ENCODE measurements at regions of chr3 and their contacts with region 1.

Region 1: GRCh38 chr3:45760878-45761711 is 35.2 kb downstream of the SLC6A20 start:
- DNase-seq: peak; percentile 60
- ATAC-seq: peak; percentile 77
- H3K4me3 Mint-ChIP-seq: no peak overlapping the region
- H3K27ac Mint-ChIP-seq: no peak overlapping the region
- H3K4me1 Mint-ChIP-seq: peaks cover 2% of the 10 kb centered on the region
- H3K27me3 Mint-ChIP-seq: peaks cover 3% of the 10 kb centered on the region
- CTCF ChIP-seq: peak; percentile 77

Region 2: DNA sequence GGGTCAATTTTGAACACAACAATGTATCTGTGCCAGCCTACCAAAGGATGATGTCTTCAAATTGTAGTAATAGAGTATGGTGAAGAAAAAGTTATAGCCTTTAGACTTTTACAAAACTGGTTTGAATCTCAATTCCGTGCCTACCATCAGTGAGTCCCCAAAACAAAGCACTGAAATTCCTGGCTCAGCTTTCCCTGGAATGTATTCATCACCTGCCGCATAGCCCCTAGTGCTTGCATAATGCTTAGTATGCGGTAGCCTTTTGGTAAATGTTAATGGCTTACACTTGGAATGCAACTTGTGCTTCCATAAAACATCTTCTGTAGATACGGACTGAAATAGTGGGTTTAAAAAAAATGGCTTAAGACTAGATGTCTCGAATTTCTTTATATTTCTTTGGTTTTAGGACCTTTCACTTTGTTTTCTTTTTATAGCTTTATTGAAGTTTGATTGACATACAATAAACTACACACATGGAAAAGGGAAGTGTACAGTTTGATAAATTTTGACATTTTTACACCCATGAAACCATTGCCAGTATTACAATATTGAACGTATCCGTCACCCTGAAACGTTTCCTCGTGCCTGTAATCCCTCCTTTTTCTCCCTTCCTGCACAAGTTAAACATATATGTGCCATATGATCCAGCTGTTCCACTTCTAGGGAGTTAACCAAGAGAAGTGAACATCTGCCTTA is 59.8 kb before region 1 on chr3:
- CTCF ChIA-PET with region 1: no interaction called
- POLR2A ChIA-PET with region 1: no interaction called
- intact Hi-C with region 1: no loop called
- DNase-seq: no peak
- ATAC-seq: no peak
- H3K4me3 Mint-ChIP-seq: no peak overlapping the region
- H3K27ac Mint-ChIP-seq: no peak overlapping the region
- H3K4me1 Mint-ChIP-seq: peaks cover 62% of the 10 kb centered on the region
- H3K27me3 Mint-ChIP-seq: no peaks in the 10 kb centered on the region
- CTCF ChIP-seq: no peak

Region 3: DNA sequence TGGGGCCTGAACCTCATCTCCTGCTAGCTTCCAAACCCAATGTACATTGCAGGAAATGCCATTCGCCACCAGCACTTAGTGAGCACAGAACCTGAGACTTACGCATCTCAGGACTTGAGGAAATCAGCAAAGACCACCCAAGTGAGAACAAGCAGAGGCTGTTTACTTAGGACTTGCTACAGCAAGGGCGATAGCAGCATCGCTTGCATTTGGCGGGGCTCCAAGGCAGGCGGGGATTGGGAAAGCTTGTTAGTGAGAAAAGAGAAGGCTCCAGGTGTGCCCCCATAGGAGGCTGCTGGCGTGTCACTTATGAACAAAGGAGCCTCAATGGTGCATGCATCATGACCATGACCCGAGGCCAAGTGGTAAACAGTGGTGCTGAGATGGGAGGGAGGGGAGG is 15.5 kb after region 1 on chr3:
- CTCF ChIA-PET with region 1: interaction called, 10 read pairs
- POLR2A ChIA-PET with region 1: no interaction called
- intact Hi-C with region 1: no loop called
- DNase-seq: no peak
- ATAC-seq: no peak
- H3K4me3 Mint-ChIP-seq: no peak overlapping the region
- H3K27ac Mint-ChIP-seq: no peak overlapping the region
- H3K4me1 Mint-ChIP-seq: peaks cover 13% of the 10 kb centered on the region
- H3K27me3 Mint-ChIP-seq: peaks cover 9% of the 10 kb centered on the region
- CTCF ChIP-seq: no peak

Region 4: GRCh38 chr3:45832691-45833090 is 71.6 kb after region 1 on chr3:
- CTCF ChIA-PET with region 1: interaction called, 23 read pairs
- POLR2A ChIA-PET with region 1: no interaction called
- intact Hi-C with region 1: no loop called
- DNase-seq: peak; percentile 18
- ATAC-seq: peak; percentile 27
- H3K4me3 Mint-ChIP-seq: no peak overlapping the region
- H3K27ac Mint-ChIP-seq: no peak overlapping the region
- H3K4me1 Mint-ChIP-seq: no peaks in the 10 kb centered on the region
- H3K27me3 Mint-ChIP-seq: no peaks in the 10 kb centered on the region
- CTCF ChIP-seq: no peak

Region 5: GRCh38 chr3:45841757-45842491 is 80.8 kb after region 1 on chr3 and contains the start of gene LZTFL1:
- CTCF ChIA-PET with region 1: interaction called, 3 read pairs
- POLR2A ChIA-PET with region 1: no interaction called
- intact Hi-C with region 1: loop called (anchors 5 kb)
- DNase-seq: peak; percentile 95
- ATAC-seq: peak; percentile 87
- H3K4me3 Mint-ChIP-seq: peak within 1 kb of the TSS; percentile 90
- H3K27ac Mint-ChIP-seq: peak within 1 kb of the TSS; percentile 83
- H3K4me1 Mint-ChIP-seq: peaks cover 15% of the 10 kb centered on the region
- H3K27me3 Mint-ChIP-seq: no peaks in the 10 kb centered on the region
- CTCF ChIP-seq: no peak
- total RNA-seq, gene LZTFL1: 4.7 TPM

Region 6: GRCh38 chr3:45917146-45917898 is 156.2 kb after region 1 on chr3:
- CTCF ChIA-PET with region 1: no interaction called
- POLR2A ChIA-PET with region 1: no interaction called
- intact Hi-C with region 1: no loop called
- DNase-seq: no peak
- ATAC-seq: no peak
- H3K4me3 Mint-ChIP-seq: no peak overlapping the region
- H3K27ac Mint-ChIP-seq: no peak overlapping the region
- H3K4me1 Mint-ChIP-seq: peaks cover 43% of the 10 kb centered on the region
- H3K27me3 Mint-ChIP-seq: peaks cover 7% of the 10 kb centered on the region
- CTCF ChIP-seq: no peak

Region 7: DNA sequence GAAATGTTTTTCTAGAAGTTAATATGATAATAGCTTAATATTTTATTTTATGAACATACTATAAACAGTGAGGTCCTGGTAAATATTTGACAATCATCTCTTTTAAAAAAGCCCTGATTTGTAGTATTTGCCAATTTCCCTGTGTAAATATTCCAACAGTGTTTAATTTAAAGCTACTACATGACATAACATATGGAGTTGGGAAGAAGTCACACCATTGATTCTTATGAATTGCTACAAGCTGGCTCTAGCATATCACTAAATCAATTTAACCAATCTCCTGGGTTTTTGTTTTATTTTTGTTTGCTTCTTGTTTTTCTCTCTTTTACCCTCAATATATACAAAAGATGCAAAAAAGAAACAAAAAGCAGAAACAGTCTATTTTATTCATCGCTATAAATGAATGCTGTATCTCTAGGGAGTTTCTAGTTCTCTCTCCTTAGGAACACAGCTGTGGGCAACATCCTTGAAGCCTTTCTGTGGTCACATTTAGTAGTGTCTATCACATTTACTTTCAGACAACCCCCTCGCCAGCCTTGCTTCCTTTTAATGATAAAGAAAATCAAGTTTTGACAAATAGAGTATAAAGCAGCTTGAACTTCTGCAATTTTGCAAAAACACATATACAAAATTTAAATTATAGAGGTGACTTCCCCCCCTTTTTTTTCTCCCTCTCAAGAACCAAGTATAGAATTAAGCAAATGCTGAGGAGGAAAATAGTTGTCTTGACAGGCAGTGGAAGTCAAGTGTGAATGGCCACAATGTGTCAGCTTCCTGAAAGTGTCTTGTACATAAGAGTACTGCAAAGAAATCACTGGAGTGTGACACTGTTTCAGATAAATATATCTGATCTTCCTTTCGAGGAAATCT is 425.6 kb after region 1 on chr3:
- CTCF ChIA-PET with region 1: no interaction called
- POLR2A ChIA-PET with region 1: no interaction called
- intact Hi-C with region 1: no loop called
- DNase-seq: peak; percentile 19
- ATAC-seq: no peak
- H3K4me3 Mint-ChIP-seq: no peak overlapping the region
- H3K27ac Mint-ChIP-seq: peak overlapping the region; percentile 7
- H3K4me1 Mint-ChIP-seq: peaks cover 17% of the 10 kb centered on the region
- H3K27me3 Mint-ChIP-seq: peaks cover 6% of the 10 kb centered on the region
- CTCF ChIP-seq: no peak

Measured in activated CD8-positive, alpha-beta T cell treated with anti-CD3 and anti-CD28 coated beads for 36 hours (primary cell).